ENCODE measurements at regions of chr20 and their contacts with region 1.

Region 1: GRCh38 chr20:62616728-62617621 is 25.3 kb upstream of the SLCO4A1 start:
- DNase-seq: peak; percentile 49
- ATAC-seq: peak; percentile 99
- H3K4me3 ChIP-seq: no peak overlapping the region
- H3K27ac ChIP-seq: no peak overlapping the region
- H3K4me1 ChIP-seq: no peaks in the 10 kb centered on the region; the same call in 1 of the 2 replicates
- H3K27me3 ChIP-seq: peaks cover 22% of the 10 kb centered on the region
- CTCF ChIP-seq: peak; percentile 95
- POLR2A ChIP-seq: no peak
- RAD21 ChIP-seq: peak; percentile 92

Region 2: DNA sequence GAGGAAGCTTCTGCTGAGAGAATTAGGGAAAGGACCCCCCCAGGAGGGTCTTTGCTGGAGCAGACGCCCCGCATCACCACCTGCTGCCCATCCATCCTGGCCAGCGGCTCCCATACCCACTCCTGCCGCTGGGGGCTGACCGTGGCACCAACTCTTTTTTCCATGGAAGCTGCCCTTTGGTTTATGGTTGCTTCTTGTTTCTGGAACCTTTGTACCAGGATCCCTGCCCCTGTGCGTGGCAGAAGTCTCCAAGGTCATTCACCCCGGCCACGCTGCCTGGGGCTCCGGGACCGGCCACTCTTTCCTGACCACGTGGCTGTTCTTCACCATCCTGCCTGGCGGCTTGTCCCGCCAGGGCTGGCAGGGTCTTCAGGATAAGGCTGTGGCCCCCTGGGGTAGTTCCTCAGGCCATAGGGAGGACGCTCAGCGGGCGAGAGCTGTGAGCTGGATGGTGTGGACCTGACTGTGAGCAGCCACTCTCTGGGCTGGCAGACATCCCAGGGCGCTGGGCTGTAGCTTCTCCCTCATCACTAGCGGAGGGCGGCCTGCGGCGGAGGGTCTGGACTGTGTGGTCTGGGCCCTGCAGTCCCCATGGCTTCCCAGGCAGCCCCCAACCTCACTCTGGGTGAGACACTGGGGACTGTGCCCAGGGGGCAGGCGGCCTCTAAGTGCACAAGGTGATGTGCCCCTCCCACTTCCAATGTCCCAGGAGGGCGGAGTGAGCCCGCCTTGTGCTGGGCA is 166.9 kb before region 1 on chr20:
- CTCF ChIA-PET with region 1: no interaction called
- POLR2A ChIA-PET with region 1: no interaction called
- dilution Hi-C with region 1: no loop called
- in situ Hi-C with region 1: no loop called
- intact Hi-C with region 1: no loop called
- DNase-seq: no peak
- ATAC-seq: no peak
- H3K4me3 ChIP-seq: no peak overlapping the region
- H3K27ac ChIP-seq: no peak overlapping the region
- H3K4me1 ChIP-seq: no peaks in the 10 kb centered on the region
- H3K27me3 ChIP-seq: peaks cover 37% of the 10 kb centered on the region
- CTCF ChIP-seq: no peak
- POLR2A ChIP-seq: no peak
- RAD21 ChIP-seq: no peak

Region 3: GRCh38 chr20:62500237-62500864 is 116.6 kb before region 1 on chr20:
- CTCF ChIA-PET with region 1: interaction called, 7 read pairs
- POLR2A ChIA-PET with region 1: no interaction called
- dilution Hi-C with region 1: no loop called
- in situ Hi-C with region 1: loop called (anchors 10 kb)
- intact Hi-C with region 1: loop called (anchors 1 kb)
- DNase-seq: peak; percentile 20
- ATAC-seq: peak; percentile 93
- H3K4me3 ChIP-seq: no peak overlapping the region
- H3K27ac ChIP-seq: no peak overlapping the region
- H3K4me1 ChIP-seq: no peaks in the 10 kb centered on the region
- H3K27me3 ChIP-seq: peaks cover 18% of the 10 kb centered on the region; the same call in 1 of the 2 replicates
- CTCF ChIP-seq: peak; percentile 72
- POLR2A ChIP-seq: no peak
- RAD21 ChIP-seq: peak; percentile 63

Measured in IMR-90 (cell line).